ENCODE measurements at regions of chr5 and their contacts with region 1.

Region 1: DNA sequence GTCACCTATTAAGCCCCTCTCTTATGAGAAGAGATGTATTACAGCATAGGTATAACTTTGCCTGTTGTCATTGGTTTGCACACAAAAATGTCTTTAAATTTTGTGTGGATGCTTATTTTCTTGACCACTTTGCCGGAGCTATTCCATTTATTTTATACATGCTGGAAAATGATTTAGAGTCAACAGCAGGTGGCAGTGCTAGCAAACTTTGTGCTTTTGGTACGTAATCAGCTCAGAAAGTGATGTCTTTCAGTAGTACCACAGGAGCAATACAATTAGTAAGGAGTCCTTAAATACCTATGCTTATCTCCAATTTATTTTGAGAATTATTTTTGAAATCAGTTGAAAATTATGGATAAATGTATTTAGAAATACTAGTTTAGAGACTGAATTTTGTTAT is 19.8 kb upstream of the NUDT12 start:
- DNase-seq: peak; percentile 35
- ATAC-seq: no peak; the same call in 2 of the 3 replicates
- H3K4me3 ChIP-seq: no peak overlapping the region
- H3K27ac ChIP-seq: no peak overlapping the region
- H3K4me1 ChIP-seq: no peaks in the 10 kb centered on the region
- H3K27me3 ChIP-seq: no peaks in the 10 kb centered on the region; a peak in 1 of 5 replicates
- CTCF ChIP-seq: peak; percentile 53
- EP300 ChIP-seq: no peak
- POLR2A ChIP-seq: no peak
- RAD21 ChIP-seq: no peak

Region 2: DNA sequence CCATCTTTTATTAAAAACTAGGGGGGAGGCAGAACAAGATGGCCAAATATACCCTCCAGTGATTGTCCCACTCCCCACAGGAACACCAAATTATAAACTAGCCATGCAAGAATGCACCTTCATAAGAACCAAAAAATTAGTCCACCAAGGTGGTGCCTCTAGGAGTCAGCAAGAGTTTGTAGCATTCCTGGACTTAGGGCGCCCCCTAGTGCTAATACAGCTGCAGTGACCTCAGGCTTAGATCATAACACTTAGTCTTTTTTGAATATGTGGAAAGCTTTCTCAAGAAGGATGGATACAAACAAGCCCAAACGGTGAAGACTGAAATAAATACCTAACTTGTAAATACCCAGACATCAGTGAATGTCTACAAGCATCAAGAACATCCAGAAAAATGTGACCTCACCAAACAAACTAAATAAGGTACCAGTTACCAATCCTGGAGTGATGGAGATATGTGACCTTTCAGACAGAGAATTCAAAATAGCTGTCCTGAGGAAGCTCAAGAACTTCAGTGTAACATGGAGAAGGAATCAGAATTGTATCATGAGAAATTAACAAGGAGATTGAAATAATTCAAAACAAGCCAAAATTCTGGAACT is 443.0 kb before region 1 on chr5:
- CTCF ChIA-PET with region 1: no interaction called
- POLR2A ChIA-PET with region 1: no interaction called
- in situ Hi-C with region 1: no loop called
- intact Hi-C with region 1: no loop called
- DNase-seq: peak; percentile 69
- ATAC-seq: peak; percentile 98
- H3K4me3 ChIP-seq: no peak overlapping the region
- H3K27ac ChIP-seq: no peak overlapping the region
- H3K4me1 ChIP-seq: no peaks in the 10 kb centered on the region
- H3K27me3 ChIP-seq: no peaks in the 10 kb centered on the region
- CTCF ChIP-seq: peak; percentile 90
- EP300 ChIP-seq: no peak
- POLR2A ChIP-seq: no peak
- RAD21 ChIP-seq: peak; percentile 78

Region 3: DNA sequence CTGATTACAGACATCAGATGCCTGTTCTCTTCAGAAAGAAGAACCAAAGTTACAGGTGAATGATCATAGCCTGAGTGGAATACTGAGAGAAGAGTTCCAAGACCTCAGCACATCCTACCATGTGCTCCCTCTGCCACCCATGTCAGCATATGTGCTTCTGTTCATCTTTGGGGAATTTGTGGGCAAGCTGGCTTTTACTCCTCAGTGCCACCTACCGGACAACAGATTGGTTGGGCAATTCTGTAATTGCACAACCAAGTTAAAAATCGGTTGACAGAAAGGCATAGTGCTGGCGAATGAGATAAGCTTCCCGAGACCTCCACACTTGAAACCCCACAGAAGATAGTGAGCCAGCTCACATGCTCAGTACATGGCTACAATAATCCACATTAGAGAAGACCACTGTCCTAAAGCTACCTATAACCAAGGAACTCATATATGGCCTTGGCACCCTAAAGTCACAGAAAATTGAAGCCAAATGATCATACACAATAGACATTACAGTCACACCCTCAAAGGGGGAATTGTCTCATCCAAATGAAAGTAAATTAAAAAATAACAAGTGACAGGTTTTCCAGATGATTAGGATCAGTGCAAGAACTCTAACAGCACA is 1218.2 kb after region 1 on chr5:
- CTCF ChIA-PET with region 1: no interaction called
- POLR2A ChIA-PET with region 1: no interaction called
- in situ Hi-C with region 1: no loop called
- intact Hi-C with region 1: loop called (anchors 2 kb)
- DNase-seq: peak; percentile 26
- ATAC-seq: peak; percentile 51
- H3K4me3 ChIP-seq: no peak overlapping the region
- H3K27ac ChIP-seq: no peak overlapping the region
- H3K4me1 ChIP-seq: no peaks in the 10 kb centered on the region
- H3K27me3 ChIP-seq: no peaks in the 10 kb centered on the region; a peak in 1 of 5 replicates
- CTCF ChIP-seq: peak; percentile 62
- EP300 ChIP-seq: no peak
- POLR2A ChIP-seq: no peak
- RAD21 ChIP-seq: no peak

Measured in HepG2 (cell line).